ENCODE measurements at regions of chr18 and their contacts with region 1.

Region 1: DNA sequence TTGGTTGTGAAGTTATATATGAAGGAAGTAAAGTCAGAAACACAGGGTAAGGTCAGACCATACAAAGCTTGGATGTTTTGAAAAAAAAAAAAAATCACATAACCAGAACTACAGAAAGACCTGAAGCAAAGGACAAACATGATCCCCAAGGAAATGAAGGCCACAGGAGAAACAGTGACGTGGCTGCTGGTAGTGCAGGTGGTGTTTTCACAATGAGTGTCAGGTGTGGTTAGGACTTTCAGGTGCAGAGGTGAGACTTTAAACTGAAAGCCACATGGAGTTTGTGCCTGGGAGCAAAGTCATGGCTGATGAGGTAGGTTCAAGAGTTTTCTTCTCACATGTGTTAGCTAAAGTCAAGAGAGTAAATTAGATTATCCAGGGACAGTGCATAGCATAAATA is 270.7 kb downstream of the PIEZO2 start:
- DNase-seq: no peak
- ATAC-seq: no peak
- H3K4me3 ChIP-seq: no peak overlapping the region
- H3K27ac ChIP-seq: no peak overlapping the region
- H3K4me1 ChIP-seq: no peaks in the 10 kb centered on the region
- H3K27me3 ChIP-seq: no peaks in the 10 kb centered on the region
- CTCF ChIP-seq: no peak

Region 2: DNA sequence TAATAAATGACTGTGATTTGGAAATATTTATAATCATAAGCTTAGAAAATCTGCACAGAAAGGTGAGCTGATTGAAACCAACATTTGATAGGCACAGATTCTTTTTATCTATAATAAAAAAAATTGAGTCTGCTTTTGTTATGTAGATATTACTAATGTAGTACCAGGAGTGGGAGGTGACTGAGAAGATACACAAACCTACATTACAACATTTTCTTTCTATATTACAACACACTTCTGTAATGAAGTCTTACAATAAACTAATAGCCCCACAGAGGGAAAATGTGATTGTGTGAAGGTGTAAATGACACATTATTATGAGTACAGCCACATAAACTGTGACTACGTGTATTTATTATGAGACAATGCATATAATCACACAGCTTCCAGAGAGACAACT is 29.0 kb after region 1 on chr18:
- CTCF ChIA-PET with region 1: no interaction called
- POLR2A ChIA-PET with region 1: no interaction called
- in situ Hi-C with region 1: no loop called
- intact Hi-C with region 1: no loop called
- DNase-seq: no peak
- ATAC-seq: no peak
- H3K4me3 ChIP-seq: no peak overlapping the region
- H3K27ac ChIP-seq: no peak overlapping the region
- H3K4me1 ChIP-seq: no peaks in the 10 kb centered on the region
- H3K27me3 ChIP-seq: no peaks in the 10 kb centered on the region
- CTCF ChIP-seq: no peak

Region 3: DNA sequence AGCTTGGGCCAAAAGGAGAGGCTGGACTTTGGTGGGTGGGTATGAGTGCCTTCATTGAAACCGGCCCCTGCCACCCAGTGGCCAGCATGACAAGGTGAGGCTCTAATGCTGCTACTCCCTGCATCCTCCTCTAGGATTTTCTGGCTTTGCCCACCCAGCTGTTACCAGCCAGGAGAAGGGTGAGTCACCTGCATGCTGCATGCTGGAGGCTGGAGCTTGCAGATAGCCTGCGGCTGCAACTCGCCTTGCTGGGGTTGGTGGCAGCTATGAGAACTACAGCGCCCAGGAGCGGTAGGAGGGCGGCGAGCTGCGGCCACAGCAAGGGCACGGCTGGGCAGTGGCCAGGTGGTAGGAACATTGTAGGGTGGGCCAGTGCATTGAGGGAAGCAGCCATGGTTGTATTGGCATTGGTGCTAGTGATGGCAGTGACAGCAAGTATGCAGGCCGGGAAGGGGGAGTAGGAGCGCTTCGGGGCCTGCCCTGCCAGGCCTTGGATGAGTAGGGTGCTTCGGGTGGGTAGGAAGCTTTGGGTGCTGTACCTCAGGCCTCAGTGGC is 655.3 kb after region 1 on chr18:
- CTCF ChIA-PET with region 1: no interaction called
- POLR2A ChIA-PET with region 1: no interaction called
- in situ Hi-C with region 1: no loop called
- intact Hi-C with region 1: loop called (anchors 10 kb)
- DNase-seq: no peak
- ATAC-seq: no peak
- H3K4me3 ChIP-seq: no peak overlapping the region
- H3K27ac ChIP-seq: no peak overlapping the region
- H3K4me1 ChIP-seq: no peaks in the 10 kb centered on the region
- H3K27me3 ChIP-seq: no peaks in the 10 kb centered on the region
- CTCF ChIP-seq: no peak

Measured in Panc1 (cell line).